Naive thymus-derived CD4-positive, alpha-beta T cell (primary cell): ENCODE measurements at regions of chr1 and their contacts with region 1.

Region 1: DNA sequence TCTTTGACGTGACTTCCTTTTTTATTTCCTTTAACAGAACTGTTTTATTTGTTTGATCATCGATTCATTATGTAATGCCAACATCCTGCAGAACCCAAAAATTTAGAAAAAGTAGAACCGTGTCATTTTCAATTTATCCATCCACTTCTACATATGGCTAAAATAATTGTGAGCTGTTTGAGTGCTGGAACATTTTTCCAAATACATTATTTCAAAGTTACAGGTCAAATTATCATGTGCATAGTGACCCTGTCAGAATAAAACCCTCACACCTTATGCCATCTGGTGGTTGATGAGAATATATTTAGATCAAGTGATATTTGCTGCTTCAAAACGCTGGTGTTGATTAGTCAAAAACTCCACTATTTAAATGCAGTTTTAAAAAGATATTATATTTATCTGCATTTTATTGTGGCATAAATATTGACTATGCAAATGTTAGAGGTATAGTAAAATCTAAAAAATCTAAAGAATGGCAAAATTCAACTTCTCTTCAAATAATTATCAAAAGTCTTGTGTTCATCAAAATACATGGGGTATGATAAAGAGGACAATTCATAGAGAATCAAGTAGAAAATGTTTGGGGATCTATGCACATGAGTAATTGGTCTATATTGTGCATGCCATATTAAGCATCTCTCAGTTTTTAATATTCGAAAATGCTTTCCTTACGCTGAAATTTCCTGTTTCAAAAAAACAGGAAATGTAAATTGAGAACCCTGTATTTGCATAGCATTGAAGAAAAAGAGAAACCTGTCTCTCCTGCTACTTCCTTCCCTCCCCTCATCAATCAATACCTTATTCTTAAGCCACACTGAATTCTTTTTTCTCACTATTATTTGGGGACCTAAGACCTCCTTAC is 39.7 kb downstream of the UBE2U start:
- DNase-seq: peak in 6 of 9 donors; percentile 1 to 50 (median 36)
- ATAC-seq: peak; percentile 56
- H3K4me3 ChIP-seq: peak overlapping the region; percentile 15
- H3K4me3 Mint-ChIP-seq: peak overlapping the region; percentile 53 to 87 (median 74)
- H3K27ac ChIP-seq: peak overlapping the region; percentile 8
- H3K27ac Mint-ChIP-seq: peak overlapping the region; percentile 5 to 78 (median 69)
- H3K4me1 ChIP-seq: peaks cover 0 to 13% of the 10 kb centered on the region in 2 donors
- H3K4me1 Mint-ChIP-seq: peaks cover 11 to 38% (median 28%) of the 10 kb centered on the region in 7 donors
- H3K27me3 ChIP-seq: no peaks in the 10 kb centered on the region
- H3K27me3 Mint-ChIP-seq: peaks cover 11 to 15% (median 12%) of the 10 kb centered on the region in 5 donors

Region 2: GRCh38 chr1:62841587-62842169 is 1401.4 kb before region 1 on chr1:
- CTCF ChIA-PET with region 1: interaction called, 4 read pairs
- POLR2A ChIA-PET with region 1: no interaction called
- intact Hi-C with region 1: loop called (anchors 1 to 5 kb)
- DNase-seq: peak in 7 of 9 donors; percentile 10 to 56 (median 40)
- ATAC-seq: peak; percentile 67
- H3K4me3 ChIP-seq: no peak overlapping the region
- H3K4me3 Mint-ChIP-seq: no peak overlapping the region
- H3K27ac ChIP-seq: no peak overlapping the region
- H3K27ac Mint-ChIP-seq: no peak overlapping the region
- H3K4me1 ChIP-seq: no peaks in the 10 kb centered on the region
- H3K4me1 Mint-ChIP-seq: no peaks in the 10 kb centered on the region
- H3K27me3 ChIP-seq: no peaks in the 10 kb centered on the region
- H3K27me3 Mint-ChIP-seq: no peaks in the 10 kb centered on the region

Region 3: DNA sequence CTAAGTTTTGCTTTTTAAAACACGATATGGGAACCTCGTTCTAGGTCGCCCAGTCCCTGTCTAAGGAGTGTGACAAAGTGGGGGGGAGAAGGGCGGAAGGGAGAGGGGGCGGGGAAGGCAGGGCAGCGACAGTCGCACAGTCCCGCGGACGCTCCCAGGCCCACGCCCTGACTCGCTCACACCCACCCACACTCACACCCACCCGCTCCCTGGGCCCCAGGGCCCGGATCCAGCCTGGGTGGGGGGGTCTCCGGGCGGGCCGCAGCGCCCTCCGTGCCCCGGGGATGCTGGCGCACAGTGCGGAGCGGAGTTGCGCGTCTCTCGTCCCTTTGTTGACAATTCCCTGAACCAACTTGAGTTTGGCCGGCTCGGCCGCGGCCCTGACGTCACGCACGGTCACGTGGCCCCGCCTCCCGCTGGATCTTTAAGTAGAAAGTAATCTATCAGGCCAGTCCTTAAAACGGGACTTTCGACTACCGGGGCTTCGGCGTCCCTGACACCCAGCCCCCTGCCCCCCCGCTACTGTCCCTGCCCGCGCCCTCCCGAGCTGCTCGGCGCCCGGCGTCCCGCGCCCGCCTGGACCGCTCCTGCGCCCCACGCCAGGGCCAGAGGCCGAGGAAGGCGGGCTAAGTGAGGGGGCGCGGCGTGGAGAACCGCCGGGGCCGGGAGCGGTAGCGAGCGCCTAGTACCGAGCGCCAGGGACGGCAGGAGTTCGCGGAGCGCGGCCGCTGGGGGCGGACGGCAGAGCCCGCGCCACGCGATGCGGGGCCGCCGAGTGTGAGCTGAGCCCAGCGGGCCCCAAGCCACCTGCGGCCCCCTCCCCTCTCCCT is 920.8 kb before region 1 on chr1 and contains the start of gene FOXD3:
- CTCF ChIA-PET with region 1: no interaction called
- POLR2A ChIA-PET with region 1: no interaction called
- intact Hi-C with region 1: loop called (anchors 5 kb)
- DNase-seq: peak in 5 of 9 donors; percentile 5 to 48 (median 26)
- ATAC-seq: peak; percentile 43
- H3K4me3 ChIP-seq: peak within 1 kb of the TSS; percentile 40
- H3K4me3 Mint-ChIP-seq: peak within 1 kb of the TSS; percentile 76 to 89 (median 84)
- H3K27ac ChIP-seq: no peak within 1 kb of the TSS
- H3K27ac Mint-ChIP-seq: peak within 1 kb of the TSS in 8 of 9 donors; percentile 67 to 88 (median 78)
- H3K4me1 ChIP-seq: peaks cover 2 to 13% of the 10 kb centered on the region in 2 donors
- H3K4me1 Mint-ChIP-seq: peaks cover 7 to 74% (median 50%) of the 10 kb centered on the region in 7 donors
- H3K27me3 ChIP-seq: peaks cover 42 to 77% of the 10 kb centered on the region in 2 donors
- H3K27me3 Mint-ChIP-seq: peaks cover 63 to 84% (median 78%) of the 10 kb centered on the region in 5 donors
- total RNA-seq, gene FOXD3: not detected

Region 4: DNA sequence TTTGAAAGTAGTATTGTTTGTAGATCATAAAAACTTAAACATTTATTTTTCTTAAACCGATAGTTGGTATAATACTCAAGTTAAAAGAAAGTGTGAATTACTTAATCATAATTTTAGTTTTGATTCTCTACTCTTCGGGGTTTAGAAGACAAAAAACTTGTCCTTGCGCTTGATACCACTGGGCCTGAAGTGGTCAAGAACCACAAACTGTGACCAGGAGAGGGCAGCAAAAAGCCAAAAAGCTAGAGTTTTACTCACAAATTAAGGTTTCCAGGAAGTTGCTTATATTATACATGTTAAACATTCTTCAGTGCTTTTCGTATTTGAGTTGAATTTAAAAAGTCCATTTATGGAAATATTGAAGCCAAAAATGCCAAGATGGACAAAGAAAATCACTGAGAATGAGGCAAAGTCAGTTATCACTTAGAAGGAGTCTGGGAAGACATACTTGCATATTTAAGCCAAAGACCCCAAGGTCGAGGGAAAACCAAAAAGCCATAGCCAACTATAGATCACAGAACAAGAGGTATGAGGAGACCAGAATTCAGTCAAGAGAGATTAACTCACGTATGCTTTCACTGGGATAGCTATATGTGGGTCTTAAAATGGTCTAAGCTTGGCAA is 685.6 kb before region 1 on chr1:
- CTCF ChIA-PET with region 1: interaction called, 17 read pairs
- POLR2A ChIA-PET with region 1: no interaction called
- intact Hi-C with region 1: loop called in 1 of 2 experiments (anchors 1 kb)
- DNase-seq: peak in 2 of 9 donors; percentile 2 to 6
- ATAC-seq: no peak
- H3K4me3 ChIP-seq: no peak overlapping the region
- H3K4me3 Mint-ChIP-seq: no peak overlapping the region
- H3K27ac ChIP-seq: no peak overlapping the region
- H3K27ac Mint-ChIP-seq: peak overlapping the region in 1 of 9 donors; percentile 72
- H3K4me1 ChIP-seq: no peaks in the 10 kb centered on the region
- H3K4me1 Mint-ChIP-seq: peaks cover 0 to 4% (median 0%) of the 10 kb centered on the region in 7 donors
- H3K27me3 ChIP-seq: no peaks in the 10 kb centered on the region
- H3K27me3 Mint-ChIP-seq: no peaks in the 10 kb centered on the region

Region 5: GRCh38 chr1:63615768-63616420 is 627.2 kb before region 1 on chr1:
- CTCF ChIA-PET with region 1: interaction called, 20 read pairs
- POLR2A ChIA-PET with region 1: no interaction called
- intact Hi-C with region 1: loop called (anchors 1 kb)
- DNase-seq: peak; percentile 7 to 81 (median 62)
- ATAC-seq: peak; percentile 88
- H3K4me3 ChIP-seq: no peak overlapping the region
- H3K4me3 Mint-ChIP-seq: no peak overlapping the region
- H3K27ac ChIP-seq: no peak overlapping the region
- H3K27ac Mint-ChIP-seq: no peak overlapping the region
- H3K4me1 ChIP-seq: no peaks in the 10 kb centered on the region
- H3K4me1 Mint-ChIP-seq: peaks cover 0 to 15% (median 5%) of the 10 kb centered on the region in 7 donors
- H3K27me3 ChIP-seq: no peaks in the 10 kb centered on the region
- H3K27me3 Mint-ChIP-seq: no peaks in the 10 kb centered on the region

Region 6: GRCh38 chr1:63773815-63774616 is 469.1 kb before region 1 on chr1 and contains the start of gene ROR1:
- CTCF ChIA-PET with region 1: no interaction called
- POLR2A ChIA-PET with region 1: no interaction called
- intact Hi-C with region 1: loop called (anchors 5 kb)
- DNase-seq: peak in 8 of 9 donors; percentile 7 to 73 (median 25)
- ATAC-seq: peak; percentile 74
- H3K4me3 ChIP-seq: no peak within 1 kb of the TSS
- H3K4me3 Mint-ChIP-seq: peak within 1 kb of the TSS; percentile 66 to 84 (median 78)
- H3K27ac ChIP-seq: no peak within 1 kb of the TSS
- H3K27ac Mint-ChIP-seq: no peak within 1 kb of the TSS
- H3K4me1 ChIP-seq: no peaks in the 10 kb centered on the region
- H3K4me1 Mint-ChIP-seq: peaks cover 10 to 20% (median 16%) of the 10 kb centered on the region in 7 donors
- H3K27me3 ChIP-seq: peaks cover 0 to 4% of the 10 kb centered on the region in 2 donors
- H3K27me3 Mint-ChIP-seq: peaks cover 61 to 75% (median 68%) of the 10 kb centered on the region in 5 donors
- total RNA-seq, gene ROR1: 0.07 to 0.22 (median 0.16) TPM in 3 of 5 experiments, not detected in the others

Region 7: GRCh38 chr1:64136752-64137411 is 106.2 kb before region 1 on chr1:
- CTCF ChIA-PET with region 1: interaction called, 13 read pairs
- POLR2A ChIA-PET with region 1: no interaction called
- intact Hi-C with region 1: loop called (anchors 1 to 5 kb)
- DNase-seq: peak; percentile 37 to 72 (median 58)
- ATAC-seq: peak; percentile 83
- H3K4me3 ChIP-seq: no peak overlapping the region
- H3K4me3 Mint-ChIP-seq: no peak overlapping the region
- H3K27ac ChIP-seq: no peak overlapping the region
- H3K27ac Mint-ChIP-seq: no peak overlapping the region
- H3K4me1 ChIP-seq: no peaks in the 10 kb centered on the region
- H3K4me1 Mint-ChIP-seq: no peaks in the 10 kb centered on the region
- H3K27me3 ChIP-seq: no peaks in the 10 kb centered on the region
- H3K27me3 Mint-ChIP-seq: peaks cover 0 to 12% (median 0%) of the 10 kb centered on the region in 5 donors

Region 8: DNA sequence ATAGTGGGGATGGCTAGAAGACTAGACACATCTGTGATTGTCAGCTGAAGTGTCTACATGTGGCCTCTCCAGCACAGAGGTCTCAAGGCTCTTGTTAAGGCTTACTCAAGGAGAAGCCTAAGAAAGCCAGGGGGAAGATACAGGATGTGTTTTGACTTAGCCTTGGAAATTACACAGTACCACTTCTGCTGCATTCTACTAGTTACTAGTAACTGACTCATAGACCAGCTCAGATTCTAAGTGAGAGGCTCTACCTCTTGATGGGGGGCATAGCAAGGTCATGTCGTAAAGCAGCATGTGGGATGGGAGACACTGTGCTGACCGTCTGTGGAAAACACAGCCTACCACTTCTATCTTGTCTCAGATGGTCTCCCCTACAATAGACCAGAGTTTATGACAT is 59.8 kb after region 1 on chr1:
- CTCF ChIA-PET with region 1: no interaction called
- POLR2A ChIA-PET with region 1: no interaction called
- intact Hi-C with region 1: no loop called
- DNase-seq: no peak
- ATAC-seq: no peak
- H3K4me3 ChIP-seq: no peak overlapping the region
- H3K4me3 Mint-ChIP-seq: no peak overlapping the region
- H3K27ac ChIP-seq: no peak overlapping the region
- H3K27ac Mint-ChIP-seq: no peak overlapping the region
- H3K4me1 ChIP-seq: no peaks in the 10 kb centered on the region
- H3K4me1 Mint-ChIP-seq: no peaks in the 10 kb centered on the region
- H3K27me3 ChIP-seq: no peaks in the 10 kb centered on the region
- H3K27me3 Mint-ChIP-seq: peaks cover 0 to 21% (median 8%) of the 10 kb centered on the region in 5 donors